Heart right ventricle (tissue), 16 donors: ENCODE measurements at regions of chr10 and their contacts with region 1.

Region 1: DNA sequence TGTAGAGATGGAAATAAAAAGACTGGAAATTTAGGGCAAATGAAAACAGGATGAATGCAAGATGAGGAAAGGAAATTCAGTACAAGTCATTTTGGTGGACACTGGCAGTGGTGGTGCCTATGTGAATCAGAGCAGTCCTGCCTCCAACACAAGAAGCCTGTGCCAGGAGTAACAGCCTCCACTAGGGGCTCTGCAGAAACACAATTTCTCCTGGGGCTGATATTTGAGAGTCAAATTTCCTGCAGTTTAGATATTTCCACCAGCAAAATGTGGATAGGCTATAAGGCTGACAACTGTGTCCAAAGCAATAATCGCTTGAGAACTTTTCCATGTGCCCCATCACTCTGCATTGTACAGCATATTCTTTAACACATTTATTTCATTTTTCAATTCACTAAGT is 4.7 kb upstream of the PLXDC2 start:
- DNase-seq: peak in 1 of 2 donors; percentile 41
- ATAC-seq: no peak
- H3K4me3 ChIP-seq: no peak overlapping the region
- H3K27ac ChIP-seq: no peak overlapping the region
- H3K4me1 ChIP-seq: peaks cover 0 to 27% (median 12%) of the 10 kb centered on the region in 9 donors
- H3K27me3 ChIP-seq: peaks cover 0 to 17% (median 0%) of the 10 kb centered on the region in 7 donors
- CTCF ChIP-seq: peak in 8 of 9 donors; percentile 15 to 68 (median 51)

Region 2: DNA sequence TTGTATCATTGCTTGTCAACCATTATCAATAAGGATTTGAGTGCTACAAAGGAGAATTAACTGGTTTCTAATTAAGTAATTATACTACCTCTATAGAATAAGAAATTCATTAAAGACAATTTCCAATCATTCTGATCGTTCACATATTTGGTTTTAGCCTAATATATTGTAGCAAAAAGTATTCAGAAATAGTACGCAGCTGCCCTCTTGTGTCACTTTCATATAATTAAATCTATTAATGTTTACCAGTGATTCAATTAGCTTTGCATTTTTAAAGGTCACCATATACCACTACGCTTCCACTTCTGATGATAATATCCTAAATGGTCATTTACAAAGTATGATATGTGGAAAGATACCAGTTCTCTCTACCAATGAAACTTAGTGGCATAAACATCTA is 957.3 kb after region 1 on chr10:
- intact Hi-C with region 1: loop called in 7 of 10 experiments (anchors 5 to 10 kb)
- DNase-seq: no peak
- ATAC-seq: peak in 2 of 8 donors; percentile 26 to 46
- H3K4me3 ChIP-seq: no peak overlapping the region
- H3K27ac ChIP-seq: no peak overlapping the region
- H3K4me1 ChIP-seq: peaks cover 0 to 16% (median 4%) of the 10 kb centered on the region in 9 donors
- H3K27me3 ChIP-seq: no peaks in the 10 kb centered on the region
- CTCF ChIP-seq: peak; percentile 19 to 74 (median 58)

Region 3: GRCh38 chr10:20776384-20777118 is 965.0 kb after region 1 on chr10:
- intact Hi-C with region 1: loop called in 1 of 10 experiments (anchors 5 kb)
- DNase-seq: no peak
- ATAC-seq: peak in 2 of 8 donors; percentile 35 to 55
- H3K4me3 ChIP-seq: no peak overlapping the region
- H3K27ac ChIP-seq: no peak overlapping the region
- H3K4me1 ChIP-seq: peaks cover 0 to 15% (median 6%) of the 10 kb centered on the region in 9 donors
- H3K27me3 ChIP-seq: no peaks in the 10 kb centered on the region
- CTCF ChIP-seq: no peak